ENCODE measurements at regions of chr9 and their contacts with region 1.

Region 1: GRCh38 chr9:105414947-105415661 is 32.7 kb upstream of the FSD1L start:
- DNase-seq: peak; percentile 63 to 65
- H3K4me3 ChIP-seq: no peak overlapping the region
- H3K4me3 Mint-ChIP-seq: peak overlapping the region; percentile 56
- H3K27ac Mint-ChIP-seq: no peak overlapping the region
- H3K4me1 ChIP-seq: peaks cover 22% of the 10 kb centered on the region
- H3K4me1 Mint-ChIP-seq: peaks cover 14% of the 10 kb centered on the region
- H3K27me3 ChIP-seq: no peaks in the 10 kb centered on the region
- H3K27me3 Mint-ChIP-seq: no peaks in the 10 kb centered on the region
- CTCF ChIP-seq: peak; percentile 86 to 94

Region 2: GRCh38 chr9:104780799-104781395 is 634.2 kb before region 1 on chr9:
- CTCF ChIA-PET with region 1: no interaction called
- POLR2A ChIA-PET with region 1: no interaction called
- intact Hi-C with region 1: loop called (anchors 1 kb)
- DNase-seq: peak in 1 of 2 experiments; percentile 17
- H3K4me3 ChIP-seq: no peak overlapping the region
- H3K4me3 Mint-ChIP-seq: no peak overlapping the region
- H3K27ac Mint-ChIP-seq: no peak overlapping the region
- H3K4me1 ChIP-seq: no peaks in the 10 kb centered on the region
- H3K4me1 Mint-ChIP-seq: no peaks in the 10 kb centered on the region
- H3K27me3 ChIP-seq: no peaks in the 10 kb centered on the region
- H3K27me3 Mint-ChIP-seq: no peaks in the 10 kb centered on the region
- CTCF ChIP-seq: peak; percentile 21 to 29

Region 3: DNA sequence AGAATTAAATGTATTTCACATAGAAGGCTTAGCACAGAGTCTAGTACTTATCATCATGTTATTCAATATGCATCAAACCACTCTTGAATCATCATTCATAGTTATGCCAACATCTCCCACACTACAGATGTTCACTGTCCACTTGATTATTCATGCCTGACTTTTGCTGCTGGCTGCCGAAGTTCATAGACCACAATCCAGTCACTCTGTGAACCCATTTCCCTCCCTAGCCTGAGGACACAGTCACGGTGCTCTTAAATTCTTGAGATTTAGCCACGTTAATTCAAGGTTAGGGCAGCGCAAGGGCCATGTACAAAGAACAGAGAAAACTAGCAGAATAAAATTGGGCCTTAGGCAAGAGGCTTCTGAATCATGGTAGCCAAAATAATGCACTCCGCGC is 519.5 kb before region 1 on chr9:
- CTCF ChIA-PET with region 1: no interaction called
- POLR2A ChIA-PET with region 1: no interaction called
- intact Hi-C with region 1: no loop called
- DNase-seq: no peak
- H3K4me3 ChIP-seq: no peak overlapping the region
- H3K4me3 Mint-ChIP-seq: no peak overlapping the region
- H3K27ac Mint-ChIP-seq: no peak overlapping the region
- H3K4me1 ChIP-seq: peaks cover 9% of the 10 kb centered on the region; the same call in 1 of the 2 replicates
- H3K4me1 Mint-ChIP-seq: no peaks in the 10 kb centered on the region
- H3K27me3 ChIP-seq: no peaks in the 10 kb centered on the region
- H3K27me3 Mint-ChIP-seq: no peaks in the 10 kb centered on the region
- CTCF ChIP-seq: no peak

Region 4: DNA sequence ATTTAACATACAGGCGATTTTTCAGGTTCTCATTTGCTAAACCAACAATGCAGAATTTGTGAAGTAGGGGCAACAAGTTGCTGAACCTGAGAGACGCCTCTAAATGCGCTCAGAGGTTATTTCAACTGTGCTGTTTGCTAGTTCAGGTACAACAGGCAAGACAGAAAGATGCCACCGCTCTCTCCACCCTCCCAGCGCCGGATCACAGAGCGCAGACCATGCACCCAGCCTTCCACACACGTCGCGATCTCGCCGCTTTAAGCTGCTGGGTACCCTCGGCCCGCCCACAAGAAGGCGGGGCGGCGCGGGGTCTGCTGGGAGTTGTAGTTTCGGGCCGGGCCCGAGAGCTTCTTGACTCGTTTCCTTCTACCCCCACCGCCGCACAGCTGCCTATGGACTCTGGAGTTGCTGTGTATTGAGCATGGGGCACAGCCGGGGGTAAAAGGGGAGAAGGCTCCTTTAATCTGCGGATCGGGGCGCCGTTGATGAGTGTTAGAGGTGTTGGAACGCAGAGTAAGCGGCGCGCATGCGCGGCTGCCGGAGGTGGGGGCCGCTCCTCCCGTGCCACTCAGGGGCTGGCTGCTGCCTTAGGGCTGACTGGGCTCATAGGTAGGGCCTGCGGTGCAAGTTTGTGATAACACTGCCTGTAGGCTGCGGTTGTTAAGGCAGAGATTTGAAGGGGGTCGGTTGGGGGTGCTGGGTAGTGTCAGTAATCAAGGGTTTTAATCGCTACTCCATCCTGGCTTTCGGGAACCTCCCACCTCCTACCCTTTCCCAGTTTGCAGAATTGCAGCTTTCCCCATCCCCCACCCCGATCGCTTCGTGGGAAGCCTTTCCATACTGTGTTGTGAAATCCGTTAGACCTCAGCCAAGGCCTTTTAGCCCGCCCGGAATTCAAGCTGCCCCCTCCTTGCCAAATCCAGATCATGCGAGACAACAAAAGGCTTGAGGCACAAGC is 446.8 kb before region 1 on chr9:
- CTCF ChIA-PET with region 1: no interaction called
- POLR2A ChIA-PET with region 1: no interaction called
- intact Hi-C with region 1: loop called (anchors 1 kb)
- DNase-seq: peak; percentile 87 to 90
- H3K4me3 ChIP-seq: peak overlapping the region; percentile 77
- H3K4me3 Mint-ChIP-seq: peak overlapping the region; percentile 89
- H3K27ac Mint-ChIP-seq: peak overlapping the region; percentile 82
- H3K4me1 ChIP-seq: peaks cover 22% of the 10 kb centered on the region
- H3K4me1 Mint-ChIP-seq: peaks cover 37% of the 10 kb centered on the region
- H3K27me3 ChIP-seq: no peaks in the 10 kb centered on the region
- H3K27me3 Mint-ChIP-seq: no peaks in the 10 kb centered on the region
- CTCF ChIP-seq: no peak

Region 5: DNA sequence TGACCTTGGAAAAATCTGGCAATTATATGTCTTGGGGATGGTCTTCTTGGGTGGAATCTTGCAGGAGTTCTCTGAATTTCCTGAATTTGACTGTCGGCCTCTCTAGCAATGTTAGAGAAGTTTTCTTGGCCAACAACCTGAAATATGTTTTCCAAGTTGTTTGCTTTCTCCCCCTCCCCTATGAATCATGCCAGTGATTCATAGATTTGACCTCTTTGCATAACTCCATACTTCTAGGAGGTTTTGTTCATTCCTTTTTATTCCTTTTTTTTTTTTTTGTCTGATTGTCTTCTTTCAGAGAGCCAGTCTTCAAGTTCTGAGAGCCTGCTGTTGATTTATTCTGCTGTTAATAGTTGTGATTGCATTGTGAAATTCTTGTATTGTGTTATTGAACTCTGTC is 227.3 kb before region 1 on chr9:
- CTCF ChIA-PET with region 1: no interaction called
- POLR2A ChIA-PET with region 1: no interaction called
- intact Hi-C with region 1: loop called (anchors 1 kb)
- DNase-seq: no peak
- H3K4me3 ChIP-seq: no peak overlapping the region
- H3K4me3 Mint-ChIP-seq: no peak overlapping the region
- H3K27ac Mint-ChIP-seq: no peak overlapping the region
- H3K4me1 ChIP-seq: no peaks in the 10 kb centered on the region
- H3K4me1 Mint-ChIP-seq: no peaks in the 10 kb centered on the region
- H3K27me3 ChIP-seq: no peaks in the 10 kb centered on the region
- H3K27me3 Mint-ChIP-seq: no peaks in the 10 kb centered on the region
- CTCF ChIP-seq: no peak

Region 6: GRCh38 chr9:105251733-105252404 is 163.2 kb before region 1 on chr9:
- CTCF ChIA-PET with region 1: no interaction called
- POLR2A ChIA-PET with region 1: no interaction called
- intact Hi-C with region 1: loop called (anchors 1 kb)
- DNase-seq: peak in 1 of 2 experiments; percentile 16
- H3K4me3 ChIP-seq: no peak overlapping the region
- H3K4me3 Mint-ChIP-seq: no peak overlapping the region
- H3K27ac Mint-ChIP-seq: peak overlapping the region; percentile 4
- H3K4me1 ChIP-seq: peaks cover 11% of the 10 kb centered on the region; the same call in 1 of the 2 replicates
- H3K4me1 Mint-ChIP-seq: peaks cover 13% of the 10 kb centered on the region
- H3K27me3 ChIP-seq: no peaks in the 10 kb centered on the region
- H3K27me3 Mint-ChIP-seq: no peaks in the 10 kb centered on the region
- CTCF ChIP-seq: no peak

Region 7: GRCh38 chr9:105392531-105392930 is 22.6 kb before region 1 on chr9:
- CTCF ChIA-PET with region 1: no interaction called
- POLR2A ChIA-PET with region 1: no interaction called
- intact Hi-C with region 1: no loop called
- DNase-seq: no peak
- H3K4me3 ChIP-seq: no peak overlapping the region
- H3K4me3 Mint-ChIP-seq: no peak overlapping the region
- H3K27ac Mint-ChIP-seq: no peak overlapping the region
- H3K4me1 ChIP-seq: no peaks in the 10 kb centered on the region
- H3K4me1 Mint-ChIP-seq: no peaks in the 10 kb centered on the region
- H3K27me3 ChIP-seq: no peaks in the 10 kb centered on the region
- H3K27me3 Mint-ChIP-seq: no peaks in the 10 kb centered on the region
- CTCF ChIP-seq: no peak

Region 8: GRCh38 chr9:106075960-106076327 is 660.8 kb after region 1 on chr9:
- CTCF ChIA-PET with region 1: no interaction called
- POLR2A ChIA-PET with region 1: no interaction called
- intact Hi-C with region 1: no loop called
- DNase-seq: no peak
- H3K4me3 ChIP-seq: no peak overlapping the region
- H3K4me3 Mint-ChIP-seq: no peak overlapping the region
- H3K27ac Mint-ChIP-seq: no peak overlapping the region
- H3K4me1 ChIP-seq: peaks cover 9% of the 10 kb centered on the region; the same call in 1 of the 2 replicates
- H3K4me1 Mint-ChIP-seq: no peaks in the 10 kb centered on the region
- H3K27me3 ChIP-seq: no peaks in the 10 kb centered on the region
- H3K27me3 Mint-ChIP-seq: no peaks in the 10 kb centered on the region
- CTCF ChIP-seq: no peak

Measured in Caco-2 (cell line).